GM18951 (cell line): ENCODE measurements at regions of chr15 and their contacts with region 1.

Region 1: DNA sequence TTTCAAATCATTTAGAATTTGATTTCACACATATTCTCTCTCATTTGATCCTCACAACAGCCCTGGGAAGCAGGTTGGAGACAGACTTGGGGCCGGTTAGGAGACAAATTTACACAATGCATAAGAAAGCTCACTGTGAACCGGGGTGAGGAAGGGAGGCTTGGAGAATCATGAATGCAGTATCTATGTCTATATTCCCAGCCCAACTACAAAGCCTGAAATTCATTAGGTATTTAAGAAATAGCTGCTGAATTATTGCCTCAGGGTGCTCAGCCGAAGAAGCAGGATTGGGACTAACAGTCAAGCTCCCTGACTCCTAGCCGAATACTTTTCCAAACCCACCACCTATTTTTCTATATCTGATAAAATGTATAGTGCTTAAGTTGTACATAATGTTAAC is 8.4 kb upstream of the GOLGA6C start:
- POLR2A ChIP-seq: no peak

Region 2: DNA sequence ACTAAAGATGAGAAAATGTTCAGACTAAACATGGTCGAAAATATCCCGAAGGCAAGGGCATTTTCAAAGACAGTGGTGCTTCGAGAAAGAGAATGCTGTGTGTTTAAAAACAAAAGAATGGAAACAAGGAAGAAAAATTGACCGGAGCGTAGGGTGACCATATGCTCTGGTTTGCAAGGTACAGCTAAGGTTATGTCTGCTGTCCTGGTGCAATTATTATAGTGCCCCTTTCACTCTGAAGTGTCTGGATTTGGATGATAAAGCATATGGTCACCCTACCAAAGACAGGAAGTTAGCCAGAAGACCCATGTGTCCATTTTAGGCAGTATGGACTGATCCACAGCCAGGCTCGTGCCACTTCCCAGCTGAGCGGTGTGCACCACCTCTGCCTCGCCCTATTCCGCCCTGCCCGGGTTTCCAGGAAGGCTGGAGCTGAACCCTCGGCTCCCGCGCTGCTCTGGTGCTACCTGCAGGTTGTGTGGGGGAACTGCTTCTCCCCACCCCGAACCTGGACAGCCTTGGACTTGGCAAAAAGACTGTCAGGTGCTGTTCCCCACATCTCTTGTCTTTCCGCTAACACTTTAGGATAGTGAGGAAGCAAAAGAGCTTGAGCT is 58.2 kb after region 1 on chr15:
- in situ Hi-C with region 1: loop called (anchors 10 kb)
- POLR2A ChIP-seq: no peak

Region 3: DNA sequence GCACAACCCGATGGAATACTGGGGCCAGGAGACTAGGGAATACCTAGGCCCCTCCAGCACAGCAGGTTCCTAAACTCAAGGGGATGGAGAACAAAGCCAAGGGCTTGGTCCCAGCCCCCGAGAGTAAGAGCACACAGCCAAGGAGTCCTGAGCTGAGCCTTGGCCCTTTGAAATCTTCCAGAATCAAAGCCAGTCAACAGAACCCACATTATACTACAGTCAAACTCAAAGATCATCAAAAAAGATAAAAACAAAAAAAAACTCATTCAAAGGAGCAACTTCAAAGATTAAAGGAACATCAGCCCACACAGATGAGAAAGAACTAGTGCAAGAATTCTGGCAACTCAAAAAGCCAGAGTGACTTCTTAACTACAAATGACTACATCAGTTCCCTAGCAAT is 1303.8 kb after region 1 on chr15:
- in situ Hi-C with region 1: no loop called
- POLR2A ChIP-seq: no peak